Natural killer cell (primary cell): ENCODE measurements at regions of chr17 and their contacts with region 1.

Region 1: GRCh38 chr17:39235555-39236449 is 10.1 kb upstream of the STAC2 start:
- DNase-seq: peak in 1 of 2 donors; percentile 78
- ATAC-seq: peak; percentile 39 to 63 (median 51)
- H3K4me3 ChIP-seq: no peak overlapping the region
- H3K4me3 Mint-ChIP-seq: no peak overlapping the region
- H3K27ac ChIP-seq: no peak overlapping the region
- H3K27ac Mint-ChIP-seq: peak overlapping the region in 1 of 2 donors; percentile 52
- H3K4me1 ChIP-seq: peaks cover 38% of the 10 kb centered on the region
- H3K4me1 Mint-ChIP-seq: peaks cover 26 to 38% of the 10 kb centered on the region in 2 donors
- H3K27me3 ChIP-seq: no peaks in the 10 kb centered on the region
- H3K27me3 Mint-ChIP-seq: peaks cover under 1 to 10% of the 10 kb centered on the region in 2 donors
- CTCF ChIP-seq: peak; percentile 48

Region 2: GRCh38 chr17:39069114-39069756 is 166.6 kb before region 1 on chr17:
- intact Hi-C with region 1: loop called (anchors 5 kb)
- DNase-seq: peak in 1 of 2 donors; percentile 75
- ATAC-seq: peak; percentile 71 to 98 (median 93)
- H3K4me3 ChIP-seq: no peak overlapping the region
- H3K4me3 Mint-ChIP-seq: no peak overlapping the region
- H3K27ac ChIP-seq: no peak overlapping the region
- H3K27ac Mint-ChIP-seq: peak overlapping the region in 1 of 2 donors; percentile 11
- H3K4me1 ChIP-seq: peaks cover 5% of the 10 kb centered on the region
- H3K4me1 Mint-ChIP-seq: peaks cover 6 to 12% of the 10 kb centered on the region in 2 donors
- H3K27me3 ChIP-seq: no peaks in the 10 kb centered on the region
- H3K27me3 Mint-ChIP-seq: peaks cover 0 to 3% of the 10 kb centered on the region in 2 donors
- CTCF ChIP-seq: peak; percentile 65

Region 3: GRCh38 chr17:39164675-39165143 is 71.1 kb before region 1 on chr17:
- intact Hi-C with region 1: loop called (anchors 5 kb)
- DNase-seq: peak; percentile 73 to 86
- ATAC-seq: peak; percentile 85 to 92 (median 92)
- H3K4me3 ChIP-seq: peak overlapping the region; percentile 61
- H3K4me3 Mint-ChIP-seq: peak overlapping the region; percentile 92
- H3K27ac ChIP-seq: peak overlapping the region; percentile 24
- H3K27ac Mint-ChIP-seq: peak overlapping the region; percentile 42 to 80
- H3K4me1 ChIP-seq: peaks cover 41% of the 10 kb centered on the region
- H3K4me1 Mint-ChIP-seq: peaks cover 31 to 33% of the 10 kb centered on the region in 2 donors
- H3K27me3 ChIP-seq: no peaks in the 10 kb centered on the region
- H3K27me3 Mint-ChIP-seq: no peaks in the 10 kb centered on the region
- CTCF ChIP-seq: peak; percentile 83

Region 4: GRCh38 chr17:39306509-39307212 is 70.9 kb after region 1 on chr17:
- intact Hi-C with region 1: no loop called
- DNase-seq: no peak
- ATAC-seq: no peak
- H3K4me3 ChIP-seq: no peak overlapping the region
- H3K4me3 Mint-ChIP-seq: no peak overlapping the region
- H3K27ac ChIP-seq: no peak overlapping the region
- H3K27ac Mint-ChIP-seq: no peak overlapping the region
- H3K4me1 ChIP-seq: no peaks in the 10 kb centered on the region
- H3K4me1 Mint-ChIP-seq: peaks cover 0 to 7% of the 10 kb centered on the region in 2 donors
- H3K27me3 ChIP-seq: no peaks in the 10 kb centered on the region
- H3K27me3 Mint-ChIP-seq: no peaks in the 10 kb centered on the region
- CTCF ChIP-seq: no peak